Activated B cell treated with CpG ODN at 0.5 μM for 24 hours (primary cell): ENCODE measurements at regions of chr1 and their contacts with region 1.

Region 1: GRCh38 chr1:75724472-75725022 is at the start of gene ACADM:
- DNase-seq: peak; percentile 90
- ATAC-seq: peak; percentile 92
- H3K4me3 Mint-ChIP-seq: peak within 1 kb of the TSS; percentile 100
- H3K27ac Mint-ChIP-seq: peak within 1 kb of the TSS; percentile 94
- H3K4me1 Mint-ChIP-seq: peaks cover 43% of the 10 kb centered on the region
- H3K27me3 Mint-ChIP-seq: no peaks in the 10 kb centered on the region
- CTCF ChIP-seq: no peak
- total RNA-seq, gene ACADM: 49.4 and 49.9 TPM in 2 replicates

Region 2: GRCh38 chr1:74197657-74198552 is 1526.6 kb before region 1 on chr1 and contains the starts of genes FPGT and LRRIQ3:
- CTCF ChIA-PET with region 1: no interaction called
- POLR2A ChIA-PET with region 1: interaction called, 4 read pairs
- intact Hi-C with region 1: loop called (anchors 5 kb)
- DNase-seq: peak; percentile 94
- ATAC-seq: peak; percentile 96
- H3K4me3 Mint-ChIP-seq: peak within 1 kb of the TSS; percentile 87
- H3K27ac Mint-ChIP-seq: peak within 1 kb of the TSS; percentile 92
- H3K4me1 Mint-ChIP-seq: peaks cover 27% of the 10 kb centered on the region
- H3K27me3 Mint-ChIP-seq: no peaks in the 10 kb centered on the region
- CTCF ChIP-seq: no peak
- total RNA-seq, gene FPGT: 10.1 and 12.0 TPM in 2 replicates
- total RNA-seq, gene LRRIQ3: 1.00 and 1.5 TPM in 2 replicates

Region 3: GRCh38 chr1:74733604-74734484 is 990.7 kb before region 1 on chr1:
- CTCF ChIA-PET with region 1: no interaction called
- POLR2A ChIA-PET with region 1: no interaction called
- intact Hi-C with region 1: loop called (anchors 10 kb)
- DNase-seq: no peak
- ATAC-seq: peak; percentile 61
- H3K4me3 Mint-ChIP-seq: peak overlapping the region; percentile 96
- H3K27ac Mint-ChIP-seq: peak overlapping the region; percentile 97
- H3K4me1 Mint-ChIP-seq: peaks cover 40% of the 10 kb centered on the region
- H3K27me3 Mint-ChIP-seq: no peaks in the 10 kb centered on the region
- CTCF ChIP-seq: no peak

Region 4: DNA sequence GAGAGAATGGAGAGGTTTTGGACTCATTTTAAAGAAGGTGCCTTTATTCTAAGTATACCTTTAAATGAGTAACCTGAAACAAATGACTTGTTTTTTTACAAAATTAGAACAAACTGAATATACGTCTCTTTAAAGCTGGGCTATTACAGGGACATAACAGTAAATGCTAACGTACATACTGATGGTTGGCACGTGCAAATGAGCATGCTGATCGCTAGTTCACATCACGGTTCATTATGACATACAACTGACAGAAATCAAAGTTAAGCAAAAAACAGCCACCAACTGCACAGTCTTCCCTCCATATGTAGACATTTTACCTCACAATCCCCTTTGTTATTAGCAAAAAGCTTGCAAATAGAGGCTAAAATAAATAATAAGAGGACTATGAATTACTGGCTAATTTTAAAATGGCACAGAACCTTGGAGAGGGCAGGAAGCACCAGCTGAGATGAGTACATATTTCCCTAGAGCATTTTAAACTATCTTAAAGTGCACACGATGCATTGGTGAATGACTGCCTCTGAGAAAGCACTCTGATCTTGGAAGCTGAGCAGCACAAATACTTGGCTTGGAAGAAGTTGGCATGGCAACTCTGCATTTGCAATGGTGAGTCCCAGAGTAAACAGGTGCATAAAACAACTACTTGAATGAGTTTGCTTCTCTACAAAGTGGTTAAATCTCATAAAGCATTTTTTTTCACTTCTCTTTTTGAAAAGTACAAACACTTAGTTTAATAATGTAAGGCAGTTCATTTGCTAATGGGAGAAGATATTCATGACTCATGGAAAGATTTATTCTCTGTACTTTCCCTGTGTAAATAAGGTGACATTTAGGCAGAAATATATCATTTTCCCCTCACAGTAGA is 385.7 kb before region 1 on chr1:
- CTCF ChIA-PET with region 1: no interaction called
- POLR2A ChIA-PET with region 1: interaction called, 11 read pairs
- intact Hi-C with region 1: loop called (anchors 10 kb)
- DNase-seq: no peak
- ATAC-seq: peak; percentile 71
- H3K4me3 Mint-ChIP-seq: no peak overlapping the region
- H3K27ac Mint-ChIP-seq: peak overlapping the region; percentile 54
- H3K4me1 Mint-ChIP-seq: peaks cover 39% of the 10 kb centered on the region
- H3K27me3 Mint-ChIP-seq: no peaks in the 10 kb centered on the region
- CTCF ChIP-seq: no peak

Region 5: DNA sequence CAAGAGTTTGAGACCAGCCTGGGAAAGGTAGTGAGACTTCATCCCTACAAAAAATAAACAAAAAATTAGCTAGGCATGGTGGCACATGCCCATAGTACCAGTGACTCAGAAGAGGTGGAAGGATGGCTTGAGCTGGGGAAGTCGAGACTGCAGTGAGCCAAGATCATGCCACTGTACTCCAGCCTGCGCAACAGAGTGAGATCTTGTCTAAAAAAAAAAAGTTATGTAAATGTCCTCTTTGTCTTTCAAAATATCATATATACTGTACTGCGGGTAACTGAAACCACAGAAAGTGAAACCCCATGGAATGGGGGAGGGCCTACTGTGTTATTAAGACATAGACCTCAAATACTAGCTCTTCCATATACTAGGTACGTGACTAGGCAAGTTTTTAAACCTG is 20.7 kb after region 1 on chr1:
- CTCF ChIA-PET with region 1: no interaction called
- POLR2A ChIA-PET with region 1: interaction called, 4 read pairs
- intact Hi-C with region 1: loop called (anchors 2 kb)
- DNase-seq: no peak
- ATAC-seq: peak; percentile 75
- H3K4me3 Mint-ChIP-seq: no peak overlapping the region
- H3K27ac Mint-ChIP-seq: no peak overlapping the region
- H3K4me1 Mint-ChIP-seq: peaks cover 11% of the 10 kb centered on the region
- H3K27me3 Mint-ChIP-seq: no peaks in the 10 kb centered on the region
- CTCF ChIP-seq: no peak